Lower leg skin (tissue), 4 donors: ENCODE measurements at regions of chr6 and their contacts with region 1.

Region 1: GRCh38 chr6:159693128-159693893 is at the start of gene SOD2:
- DNase-seq: peak; percentile 79 to 97
- H3K4me3 ChIP-seq: peak within 1 kb of the TSS; percentile 94
- CTCF ChIP-seq: no peak
- POLR2A ChIP-seq: peak in 1 of 2 donors; percentile 88
- total RNA-seq, gene SOD2: 117 to 280 (median 190) TPM

Region 2: DNA sequence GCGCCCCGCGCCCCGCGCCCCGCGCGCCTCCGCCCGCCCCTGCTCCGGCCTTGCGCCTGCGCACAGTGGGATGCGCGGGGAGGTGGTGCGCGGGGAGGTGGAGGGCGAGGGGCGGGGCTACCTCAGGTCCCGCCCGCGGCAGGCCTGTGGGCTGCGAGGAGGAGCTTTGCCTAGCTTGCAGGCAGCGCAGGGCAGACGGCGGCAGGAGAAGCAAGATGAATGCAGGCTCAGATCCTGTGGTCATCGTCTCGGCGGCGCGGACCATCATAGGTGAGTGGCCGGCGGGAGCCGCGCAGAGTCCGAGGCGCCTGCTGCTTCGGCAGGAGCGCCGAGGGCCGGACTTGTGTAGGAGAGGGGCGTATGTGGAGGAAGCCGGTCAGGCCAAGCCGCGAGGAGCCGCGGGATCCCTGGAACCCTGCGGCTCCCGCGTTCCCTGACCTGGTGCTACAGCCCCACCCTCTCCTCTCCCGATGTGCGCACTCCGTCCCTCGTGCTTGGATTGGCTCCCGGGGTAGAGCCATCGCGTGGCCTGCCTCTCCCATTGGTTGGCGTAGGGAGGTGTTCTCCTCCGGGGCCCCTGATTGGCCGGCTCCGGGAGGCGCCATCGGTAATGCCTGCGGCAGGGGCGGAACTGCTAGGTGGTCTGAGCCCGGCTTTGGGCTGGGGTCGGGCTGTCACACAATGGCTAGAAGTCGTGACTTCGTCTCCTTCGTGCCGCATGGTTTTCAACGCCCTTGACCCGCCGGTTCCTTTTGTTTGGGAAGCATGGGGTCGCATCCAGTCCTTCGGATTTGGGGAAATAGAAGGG is 68.8 kb after region 1 on chr6 and contains the start of gene ACAT2:
- intact Hi-C with region 1: loop called (anchors 10 kb)
- DNase-seq: peak; percentile 94 to 98
- H3K4me3 ChIP-seq: peak within 1 kb of the TSS; percentile 67
- CTCF ChIP-seq: no peak
- POLR2A ChIP-seq: no peak
- total RNA-seq, gene ACAT2: 5.4 to 31.5 (median 13.8) TPM

Region 3: GRCh38 chr6:159929819-159930218 is 236.5 kb after region 1 on chr6:
- intact Hi-C with region 1: loop called (anchors 10 kb)
- DNase-seq: peak in 1 of 2 donors; percentile 81
- H3K4me3 ChIP-seq: no peak overlapping the region
- CTCF ChIP-seq: no peak
- POLR2A ChIP-seq: no peak

Region 4: DNA sequence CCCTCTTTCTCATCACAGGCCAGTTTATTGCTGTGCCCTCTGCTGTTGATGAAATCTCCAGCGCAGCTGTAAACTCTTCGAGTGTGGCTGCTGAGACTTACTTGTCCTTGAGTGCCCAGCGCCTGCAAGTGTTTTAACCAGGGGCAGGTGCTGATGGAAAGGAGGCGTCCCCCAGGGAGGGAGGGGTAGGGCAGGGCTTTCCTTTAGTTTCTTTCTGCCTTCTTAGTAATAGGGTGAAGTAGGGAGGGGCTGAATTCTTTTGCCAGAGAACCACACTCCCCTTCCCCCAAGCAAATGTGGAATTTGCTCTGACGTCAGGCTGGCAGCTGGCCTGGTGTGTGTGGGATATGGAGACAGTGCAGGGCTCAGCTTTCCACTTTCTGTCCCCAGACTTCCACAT is 336.8 kb after region 1 on chr6:
- intact Hi-C with region 1: no loop called
- DNase-seq: peak; percentile 46 to 94
- H3K4me3 ChIP-seq: no peak overlapping the region
- CTCF ChIP-seq: no peak
- POLR2A ChIP-seq: no peak